CD4-positive, alpha-beta T cell (primary cell): ENCODE measurements at regions of chr9 and their contacts with region 1.

Region 1: DNA sequence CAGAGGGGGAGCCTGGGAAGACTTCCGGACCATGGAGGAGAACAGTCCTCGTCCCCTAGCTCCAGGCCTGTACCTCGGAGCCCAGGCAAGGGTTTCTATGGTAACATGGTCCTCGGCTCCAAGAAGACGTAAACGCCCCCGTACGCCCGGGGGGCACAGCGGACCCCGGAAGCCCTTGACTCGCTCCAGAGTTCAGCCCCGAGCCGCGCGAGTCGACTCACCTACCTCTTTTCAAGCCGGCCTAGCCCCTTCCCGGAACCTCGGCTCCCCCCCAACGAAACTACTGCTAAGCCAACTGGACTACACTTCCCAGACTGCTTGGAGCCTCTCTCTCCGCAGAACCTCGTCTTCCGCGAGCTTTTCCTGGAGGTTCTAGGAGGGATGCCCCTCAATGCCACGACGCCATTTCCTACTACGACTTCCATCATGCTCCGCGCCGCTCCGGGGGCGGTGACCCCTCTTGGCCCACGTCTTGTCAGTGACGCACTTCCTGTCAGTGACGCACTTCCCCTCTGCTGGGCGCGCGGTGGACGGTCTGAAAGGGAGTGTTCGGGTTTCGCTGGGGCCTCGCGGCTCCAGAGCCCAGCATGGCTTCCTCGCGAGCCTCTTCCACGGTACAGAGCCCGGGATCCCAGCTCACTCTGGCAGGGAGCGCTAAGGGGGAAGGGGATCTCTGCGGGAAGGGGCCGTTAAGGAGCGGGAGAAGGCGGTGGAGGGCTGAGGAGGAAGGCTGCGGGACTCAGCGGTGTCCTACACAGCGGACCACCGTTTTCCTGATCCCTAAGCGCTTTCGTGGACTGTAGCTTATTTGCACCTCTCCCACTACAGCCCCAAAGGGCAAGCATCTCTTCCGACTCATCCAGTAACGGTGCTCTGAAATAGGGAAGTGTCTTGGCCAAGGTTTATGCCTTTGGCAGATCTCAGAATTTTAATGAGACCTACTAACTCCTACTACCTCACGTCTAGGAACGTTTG is at the starts of genes CDC26 and PRPF4:
- DNase-seq: peak; percentile 88 to 98 (median 93)
- ATAC-seq: peak; percentile 91
- H3K4me3 ChIP-seq: peak within 1 kb of the TSS; percentile 77
- H3K4me3 Mint-ChIP-seq: no peak within 1 kb of the TSS
- H3K27ac ChIP-seq: peak within 1 kb of the TSS; percentile 93 to 94
- H3K27ac Mint-ChIP-seq: no peak within 1 kb of the TSS
- H3K4me1 ChIP-seq: peaks cover 6% of the 10 kb centered on the region
- H3K4me1 Mint-ChIP-seq: peaks cover 24% of the 10 kb centered on the region
- H3K27me3 ChIP-seq: no peaks in the 10 kb centered on the region
- H3K27me3 Mint-ChIP-seq: no peaks in the 10 kb centered on the region
- CTCF ChIP-seq: no peak
- total RNA-seq, gene CDC26: 15.8 to 18.0 TPM
- total RNA-seq, gene PRPF4: 23.4 to 25.5 TPM

Region 2: DNA sequence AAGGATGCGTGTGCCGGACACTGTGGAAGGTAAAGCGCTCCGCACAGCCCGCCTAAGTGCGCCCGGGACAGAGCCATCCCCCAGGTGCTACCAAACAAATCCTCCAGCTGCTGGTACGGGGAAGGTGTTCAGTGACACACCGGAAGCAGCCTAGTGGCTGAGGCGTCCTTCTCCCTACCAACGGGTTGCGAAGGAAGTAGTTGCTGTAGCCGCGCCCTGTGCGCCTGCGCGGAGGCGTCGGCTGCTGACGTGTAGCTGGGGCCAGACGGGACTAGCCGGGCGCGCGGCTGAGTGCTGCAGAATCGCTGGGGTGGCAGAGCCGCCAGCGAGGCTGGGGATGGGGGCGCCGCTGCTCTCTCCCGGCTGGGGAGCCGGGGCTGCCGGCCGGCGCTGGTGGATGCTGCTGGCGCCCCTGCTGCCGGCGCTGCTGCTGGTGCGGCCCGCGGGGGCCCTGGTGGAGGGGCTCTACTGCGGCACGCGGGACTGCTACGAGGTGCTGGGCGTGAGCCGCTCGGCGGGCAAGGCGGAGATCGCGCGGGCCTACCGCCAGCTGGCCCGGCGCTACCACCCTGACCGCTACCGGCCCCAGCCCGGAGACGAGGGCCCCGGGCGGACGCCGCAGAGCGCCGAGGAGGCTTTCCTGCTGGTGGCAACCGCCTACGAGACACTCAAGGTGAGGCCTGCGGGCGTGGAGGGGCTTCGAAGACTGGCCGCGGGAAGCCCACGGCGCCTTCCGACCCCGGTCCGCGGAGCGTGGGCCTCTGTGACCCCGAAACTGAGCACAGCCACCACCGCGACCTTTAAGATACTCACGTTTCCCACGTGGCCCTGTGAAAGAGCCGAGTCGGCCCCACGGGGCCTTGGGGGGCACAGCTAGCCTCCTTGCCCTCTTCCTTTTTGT is 1644.1 kb before region 1 on chr9 and contains the start of gene DNAJC25:
- CTCF ChIA-PET with region 1: no interaction called
- POLR2A ChIA-PET with region 1: no interaction called
- intact Hi-C with region 1: loop called in 1 of 2 experiments (anchors 5 kb)
- DNase-seq: peak; percentile 91 to 100 (median 96)
- ATAC-seq: peak; percentile 92
- H3K4me3 ChIP-seq: peak within 1 kb of the TSS; percentile 74
- H3K4me3 Mint-ChIP-seq: peak within 1 kb of the TSS; percentile 99
- H3K27ac ChIP-seq: peak within 1 kb of the TSS; percentile 3 to 75
- H3K27ac Mint-ChIP-seq: peak within 1 kb of the TSS; percentile 90
- H3K4me1 ChIP-seq: peaks cover 18% of the 10 kb centered on the region
- H3K4me1 Mint-ChIP-seq: peaks cover 58% of the 10 kb centered on the region
- H3K27me3 ChIP-seq: no peaks in the 10 kb centered on the region
- H3K27me3 Mint-ChIP-seq: no peaks in the 10 kb centered on the region
- CTCF ChIP-seq: no peak
- total RNA-seq, gene DNAJC25: 4.5 to 4.8 TPM

Region 3: GRCh38 chr9:113340017-113340699 is 64.7 kb after region 1 on chr9 and contains the start of gene WDR31:
- CTCF ChIA-PET with region 1: interaction called, 4 read pairs
- POLR2A ChIA-PET with region 1: interaction called, 4 read pairs
- intact Hi-C with region 1: loop called in 1 of 2 experiments (anchors 1 kb)
- DNase-seq: peak; percentile 56 to 88 (median 74)
- ATAC-seq: peak; percentile 99
- H3K4me3 ChIP-seq: peak within 1 kb of the TSS; percentile 82
- H3K4me3 Mint-ChIP-seq: peak within 1 kb of the TSS; percentile 91
- H3K27ac ChIP-seq: no peak within 1 kb of the TSS
- H3K27ac Mint-ChIP-seq: peak within 1 kb of the TSS; percentile 14
- H3K4me1 ChIP-seq: peaks cover 18% of the 10 kb centered on the region
- H3K4me1 Mint-ChIP-seq: peaks cover 25% of the 10 kb centered on the region
- H3K27me3 ChIP-seq: no peaks in the 10 kb centered on the region
- H3K27me3 Mint-ChIP-seq: peaks cover 11% of the 10 kb centered on the region
- CTCF ChIP-seq: no peak
- total RNA-seq, gene WDR31: 0.14 to 0.22 TPM

Region 4: DNA sequence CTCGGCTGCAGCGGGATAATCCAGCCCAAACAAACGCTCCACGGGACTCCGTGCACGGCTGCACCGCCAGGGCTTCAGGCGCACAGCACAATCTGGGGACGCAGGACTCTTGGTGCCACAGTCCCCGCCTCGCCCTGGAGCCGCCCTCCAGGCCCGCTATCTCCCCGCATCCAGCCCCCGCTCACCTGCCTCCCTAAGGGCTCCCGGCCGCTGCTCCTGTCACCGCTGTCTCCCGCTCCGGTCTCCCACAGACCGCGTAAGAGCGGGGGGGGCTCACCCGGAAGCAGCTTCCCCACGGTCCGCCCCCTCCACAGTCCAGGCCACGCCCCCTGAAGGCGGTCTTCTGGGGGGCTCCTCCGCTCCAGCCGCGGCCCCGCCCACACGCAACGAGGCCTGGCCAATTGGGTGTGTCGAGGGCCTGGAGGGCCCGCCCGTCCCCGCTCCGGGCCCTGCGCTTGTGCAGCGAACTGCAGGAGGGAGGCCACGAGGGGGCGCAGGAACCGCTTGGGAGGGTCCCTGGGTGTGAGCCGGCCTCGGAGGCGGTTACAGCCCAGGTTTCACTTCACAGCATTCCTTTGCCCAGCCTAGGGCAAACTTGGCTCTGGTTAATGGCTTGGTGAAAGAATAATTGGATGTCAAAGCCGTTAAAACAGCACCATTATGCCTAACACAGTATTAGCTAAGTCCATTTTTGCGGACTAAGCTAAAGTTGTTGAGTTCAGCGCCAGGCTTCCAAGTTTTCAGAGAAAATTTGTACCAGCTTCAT is 125.8 kb after region 1 on chr9 and contains the start of gene ALAD:
- CTCF ChIA-PET with region 1: interaction called, 7 read pairs
- POLR2A ChIA-PET with region 1: interaction called, 16 read pairs
- intact Hi-C with region 1: loop called in 1 of 2 experiments (anchors 2 kb)
- DNase-seq: peak; percentile 98 to 100 (median 99)
- ATAC-seq: peak; percentile 98
- H3K4me3 ChIP-seq: peak within 1 kb of the TSS; percentile 98
- H3K4me3 Mint-ChIP-seq: peak within 1 kb of the TSS; percentile 98
- H3K27ac ChIP-seq: peak within 1 kb of the TSS; percentile 50 to 54
- H3K27ac Mint-ChIP-seq: peak within 1 kb of the TSS; percentile 86
- H3K4me1 ChIP-seq: peaks cover 33% of the 10 kb centered on the region
- H3K4me1 Mint-ChIP-seq: peaks cover 34% of the 10 kb centered on the region
- H3K27me3 ChIP-seq: no peaks in the 10 kb centered on the region
- H3K27me3 Mint-ChIP-seq: no peaks in the 10 kb centered on the region
- CTCF ChIP-seq: peak; percentile 93
- total RNA-seq, gene ALAD: 14.5 to 15.0 TPM

Region 5: GRCh38 chr9:113578882-113579282 is 303.4 kb after region 1 on chr9:
- CTCF ChIA-PET with region 1: interaction called, 4 read pairs
- POLR2A ChIA-PET with region 1: interaction called, 5 read pairs
- intact Hi-C with region 1: loop called (anchors 2 kb)
- DNase-seq: peak; percentile 58 to 93 (median 77)
- ATAC-seq: peak; percentile 59
- H3K4me3 ChIP-seq: peak overlapping the region; percentile 25
- H3K4me3 Mint-ChIP-seq: peak overlapping the region; percentile 85
- H3K27ac ChIP-seq: peak overlapping the region; percentile 72 to 77
- H3K27ac Mint-ChIP-seq: peak overlapping the region; percentile 94
- H3K4me1 ChIP-seq: peaks cover 74% of the 10 kb centered on the region
- H3K4me1 Mint-ChIP-seq: peaks cover 78% of the 10 kb centered on the region
- H3K27me3 ChIP-seq: no peaks in the 10 kb centered on the region
- H3K27me3 Mint-ChIP-seq: no peaks in the 10 kb centered on the region
- CTCF ChIP-seq: no peak

Region 6: GRCh38 chr9:113657703-113658544 is 382.5 kb after region 1 on chr9:
- CTCF ChIA-PET with region 1: interaction called, 21 read pairs
- POLR2A ChIA-PET with region 1: no interaction called
- intact Hi-C with region 1: loop called (anchors 1 kb)
- DNase-seq: peak; percentile 60 to 87 (median 74)
- ATAC-seq: peak; percentile 92
- H3K4me3 ChIP-seq: no peak overlapping the region
- H3K4me3 Mint-ChIP-seq: no peak overlapping the region
- H3K27ac ChIP-seq: no peak overlapping the region
- H3K27ac Mint-ChIP-seq: no peak overlapping the region
- H3K4me1 ChIP-seq: peaks cover 10% of the 10 kb centered on the region
- H3K4me1 Mint-ChIP-seq: peaks cover 4% of the 10 kb centered on the region
- H3K27me3 ChIP-seq: no peaks in the 10 kb centered on the region
- H3K27me3 Mint-ChIP-seq: peaks cover 15% of the 10 kb centered on the region
- CTCF ChIP-seq: peak; percentile 88